ENCODE measurements at regions of chr16 and their contacts with region 1.

Region 1: GRCh38 chr16:60788631-60789030 is 1247.6 kb downstream of the CDH8 start:
- DNase-seq: no peak
- H3K4me3 Mint-ChIP-seq: no peak overlapping the region
- H3K27ac Mint-ChIP-seq: no peak overlapping the region
- H3K4me1 Mint-ChIP-seq: no peaks in the 10 kb centered on the region
- H3K27me3 Mint-ChIP-seq: no peaks in the 10 kb centered on the region
- CTCF ChIP-seq: no peak

Region 2: DNA sequence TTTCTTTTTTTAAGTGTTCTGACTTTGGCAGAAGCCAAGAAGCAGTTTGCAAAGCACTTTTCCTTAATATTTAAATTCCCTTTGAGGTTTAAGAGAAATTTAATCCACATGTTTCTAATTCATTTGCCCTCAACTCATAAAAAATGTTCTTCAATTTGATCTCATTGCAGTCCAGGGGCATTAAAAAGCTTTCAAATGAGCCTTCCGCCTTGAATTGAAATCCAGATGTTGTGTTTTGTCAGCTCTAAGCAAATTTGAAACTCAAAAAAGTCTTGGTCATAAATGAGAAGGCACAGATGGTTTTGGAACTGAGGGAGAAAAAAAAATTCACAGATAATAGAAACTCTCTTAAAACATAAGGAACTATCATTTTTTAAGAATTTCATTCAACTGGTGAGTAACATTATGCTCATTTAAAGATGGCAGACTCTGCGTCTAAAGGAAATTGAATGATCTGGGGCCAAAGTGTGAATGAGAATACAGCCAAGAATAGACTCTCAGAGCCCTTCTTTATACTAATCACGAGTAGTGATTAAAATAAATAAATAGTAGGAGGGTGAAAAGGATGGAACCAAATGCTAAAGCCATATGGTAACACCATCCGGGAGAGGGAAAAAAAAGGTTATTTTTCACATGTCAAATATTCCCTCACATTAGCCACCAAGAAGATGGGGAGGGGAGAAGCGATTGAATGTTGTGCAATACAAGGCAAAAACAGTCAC is 57.1 kb before region 1 on chr16:
- CTCF ChIA-PET with region 1: no interaction called
- intact Hi-C with region 1: no loop called
- DNase-seq: no peak
- H3K4me3 Mint-ChIP-seq: no peak overlapping the region
- H3K27ac Mint-ChIP-seq: no peak overlapping the region
- H3K4me1 Mint-ChIP-seq: no peaks in the 10 kb centered on the region
- H3K27me3 Mint-ChIP-seq: no peaks in the 10 kb centered on the region
- CTCF ChIP-seq: no peak

Region 3: DNA sequence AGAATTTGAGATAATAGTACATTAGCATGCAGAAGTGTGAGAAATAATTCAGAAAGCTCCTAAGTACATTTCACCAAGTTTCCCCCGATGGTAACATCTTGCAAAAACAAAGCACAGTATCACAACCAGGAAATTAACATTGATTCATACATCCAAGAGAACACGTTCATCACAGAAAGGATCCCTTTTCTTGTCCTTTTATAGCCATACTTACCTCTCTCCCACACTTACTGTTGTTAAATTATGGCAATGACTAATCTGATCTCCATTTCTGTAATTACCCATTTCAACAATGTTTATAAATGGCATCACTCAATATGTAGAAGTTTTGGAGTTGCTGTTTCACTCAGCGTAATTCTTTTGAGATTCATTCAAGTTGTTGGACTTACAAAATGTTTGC is 12.3 kb before region 1 on chr16:
- CTCF ChIA-PET with region 1: interaction called, 11 read pairs
- intact Hi-C with region 1: no loop called
- DNase-seq: no peak
- H3K4me3 Mint-ChIP-seq: no peak overlapping the region
- H3K27ac Mint-ChIP-seq: no peak overlapping the region
- H3K4me1 Mint-ChIP-seq: no peaks in the 10 kb centered on the region
- H3K27me3 Mint-ChIP-seq: no peaks in the 10 kb centered on the region
- CTCF ChIP-seq: no peak